Activated naive CD4-positive, alpha-beta T cell treated with anti-CD3 and anti-CD28 coated beads for 36 hours (primary cell): ENCODE measurements at regions of chr1 and their contacts with region 1.

Region 1: GRCh38 chr1:113978863-113979702 is at the start of gene OLFML3:
- DNase-seq: peak; percentile 80
- H3K4me3 Mint-ChIP-seq: no peak within 1 kb of the TSS
- H3K27ac Mint-ChIP-seq: no peak within 1 kb of the TSS
- H3K4me1 Mint-ChIP-seq: peaks cover 34% of the 10 kb centered on the region
- H3K27me3 Mint-ChIP-seq: no peaks in the 10 kb centered on the region
- total RNA-seq, gene OLFML3: 0.10 TPM in 1 of 2 experiments, not detected in the other

Region 2: GRCh38 chr1:113949007-113949406 is 30.1 kb before region 1 on chr1:
- CTCF ChIA-PET with region 1: interaction called, 6 read pairs
- intact Hi-C with region 1: loop called (anchors 2 kb)
- DNase-seq: no peak
- H3K4me3 Mint-ChIP-seq: no peak overlapping the region
- H3K27ac Mint-ChIP-seq: peak overlapping the region; percentile 79
- H3K4me1 Mint-ChIP-seq: peaks cover 74% of the 10 kb centered on the region
- H3K27me3 Mint-ChIP-seq: no peaks in the 10 kb centered on the region

Region 3: GRCh38 chr1:114152508-114153260 is 173.6 kb after region 1 on chr1:
- CTCF ChIA-PET with region 1: no interaction called
- intact Hi-C with region 1: loop called (anchors 10 kb)
- DNase-seq: peak; percentile 18
- H3K4me3 Mint-ChIP-seq: peak overlapping the region; percentile 19
- H3K27ac Mint-ChIP-seq: no peak overlapping the region
- H3K4me1 Mint-ChIP-seq: peaks cover 11% of the 10 kb centered on the region
- H3K27me3 Mint-ChIP-seq: peaks cover 54% of the 10 kb centered on the region

Region 4: DNA sequence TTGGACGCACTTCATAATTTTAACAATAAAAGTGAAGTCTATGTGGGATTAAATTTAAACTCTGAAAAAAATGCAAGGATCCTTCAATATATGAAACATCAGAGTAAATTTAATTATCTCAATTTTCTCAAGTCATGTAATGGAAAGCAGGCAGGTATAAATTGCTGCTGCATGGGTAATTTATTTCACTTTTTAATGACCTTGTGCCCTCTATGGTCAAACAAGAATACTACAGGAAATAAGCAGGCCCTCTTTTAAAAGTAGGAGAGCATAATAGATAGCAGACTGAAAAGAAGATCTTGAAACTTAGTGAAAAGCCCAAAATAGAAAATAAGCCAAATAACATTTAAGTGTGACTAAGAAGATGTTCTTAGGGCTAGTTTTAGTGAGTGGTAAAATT is 579.5 kb after region 1 on chr1:
- CTCF ChIA-PET with region 1: no interaction called
- intact Hi-C with region 1: loop called (anchors 5 kb)
- DNase-seq: no peak
- H3K4me3 Mint-ChIP-seq: no peak overlapping the region
- H3K27ac Mint-ChIP-seq: no peak overlapping the region
- H3K4me1 Mint-ChIP-seq: no peaks in the 10 kb centered on the region
- H3K27me3 Mint-ChIP-seq: no peaks in the 10 kb centered on the region

Region 5: DNA sequence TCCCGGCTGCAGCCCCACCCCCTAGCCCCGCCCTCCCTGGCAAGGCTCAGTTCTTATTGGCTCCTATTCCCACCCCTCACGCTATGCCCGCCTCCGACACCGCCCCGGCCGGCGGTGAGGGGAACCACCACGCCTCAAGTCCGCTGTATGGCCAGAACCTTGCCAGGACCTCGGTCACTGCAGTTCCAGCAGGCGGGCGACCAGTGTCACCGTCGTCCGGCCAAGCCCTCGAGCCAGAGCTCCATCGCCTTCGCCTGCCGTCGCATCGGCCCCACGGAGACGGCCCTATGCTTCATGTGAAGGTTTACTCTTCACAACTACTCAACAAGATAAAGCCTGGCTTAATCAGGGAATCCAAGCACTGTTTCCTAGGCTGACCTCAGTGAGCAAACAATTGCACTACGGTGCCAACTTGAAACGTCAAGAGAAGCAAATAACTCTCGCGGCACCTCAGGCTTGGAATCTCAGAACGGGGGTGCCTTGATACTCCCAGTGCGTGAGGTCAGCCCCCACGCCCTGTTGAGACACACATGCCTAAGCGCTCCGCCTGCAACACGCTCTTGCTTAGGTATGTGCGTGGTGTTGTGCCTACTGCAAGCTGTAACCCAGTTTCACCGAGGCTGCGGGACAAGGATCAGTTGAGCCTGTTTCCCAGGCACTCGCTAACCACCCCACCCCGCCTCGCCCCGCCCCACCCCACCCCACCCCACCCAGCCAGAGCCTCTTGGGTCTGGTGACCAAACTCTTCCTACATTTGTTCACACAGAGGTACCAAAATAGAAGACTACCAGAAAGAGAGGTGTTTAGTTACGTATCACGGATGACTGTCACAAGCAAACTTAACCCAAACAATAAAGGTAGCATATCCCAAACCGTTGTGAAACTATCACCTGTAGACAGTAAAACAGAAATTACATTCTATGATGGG is 691.3 kb after region 1 on chr1:
- CTCF ChIA-PET with region 1: no interaction called
- intact Hi-C with region 1: loop called (anchors 5 kb)
- DNase-seq: peak; percentile 87
- H3K4me3 Mint-ChIP-seq: peak overlapping the region; percentile 87
- H3K27ac Mint-ChIP-seq: no peak overlapping the region
- H3K4me1 Mint-ChIP-seq: peaks cover 4% of the 10 kb centered on the region
- H3K27me3 Mint-ChIP-seq: peaks cover 1% of the 10 kb centered on the region